ENCODE measurements at regions of chr4 and their contacts with region 1.

Region 1: DNA sequence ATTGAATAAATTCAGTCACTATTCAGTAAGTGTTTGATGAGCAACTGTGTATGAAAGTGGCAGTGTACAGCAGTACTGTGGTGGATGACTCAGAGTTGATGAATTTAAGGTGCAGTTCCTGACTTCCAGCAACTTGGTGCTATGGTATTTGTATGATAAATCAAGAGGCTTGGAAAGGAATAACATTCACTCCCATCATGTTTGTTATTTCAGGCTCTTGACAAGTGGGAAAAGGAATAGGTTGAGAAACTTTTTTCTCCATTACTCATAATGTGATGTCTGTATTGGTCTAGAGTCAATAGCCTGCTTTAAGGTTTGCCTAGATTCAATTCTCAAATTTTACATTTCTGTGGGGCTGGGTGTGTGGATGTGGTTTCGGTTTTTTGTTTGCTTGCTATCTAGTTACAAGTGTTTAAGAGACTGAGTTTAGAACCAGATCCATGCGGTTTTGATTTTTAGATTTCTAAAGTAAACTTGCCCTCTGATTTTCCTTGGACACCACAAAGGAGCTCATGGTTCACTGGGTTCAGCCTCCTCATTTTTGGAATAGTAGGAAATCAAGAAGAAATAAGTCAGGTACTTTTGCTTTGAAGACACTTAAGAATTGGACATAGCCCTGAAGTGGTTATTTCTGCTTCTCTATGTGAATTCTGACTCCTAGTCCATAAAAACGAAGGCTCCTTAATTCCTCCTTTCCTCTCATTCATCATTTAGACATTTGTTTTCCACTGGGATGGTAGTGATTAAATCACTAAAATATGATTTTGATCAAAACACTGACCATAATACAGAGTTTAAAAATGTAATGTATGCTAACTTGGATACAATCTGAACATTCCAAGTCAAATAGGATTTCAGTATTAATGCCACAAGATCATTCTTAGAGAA is 34.9 kb upstream of the CYP2U1 start:
- DNase-seq: peak; percentile 42
- ATAC-seq: peak; percentile 92
- H3K4me3 Mint-ChIP-seq: no peak overlapping the region
- H3K27ac Mint-ChIP-seq: no peak overlapping the region
- H3K4me1 Mint-ChIP-seq: peaks cover 17% of the 10 kb centered on the region
- H3K27me3 Mint-ChIP-seq: peaks cover 13% of the 10 kb centered on the region

Region 2: DNA sequence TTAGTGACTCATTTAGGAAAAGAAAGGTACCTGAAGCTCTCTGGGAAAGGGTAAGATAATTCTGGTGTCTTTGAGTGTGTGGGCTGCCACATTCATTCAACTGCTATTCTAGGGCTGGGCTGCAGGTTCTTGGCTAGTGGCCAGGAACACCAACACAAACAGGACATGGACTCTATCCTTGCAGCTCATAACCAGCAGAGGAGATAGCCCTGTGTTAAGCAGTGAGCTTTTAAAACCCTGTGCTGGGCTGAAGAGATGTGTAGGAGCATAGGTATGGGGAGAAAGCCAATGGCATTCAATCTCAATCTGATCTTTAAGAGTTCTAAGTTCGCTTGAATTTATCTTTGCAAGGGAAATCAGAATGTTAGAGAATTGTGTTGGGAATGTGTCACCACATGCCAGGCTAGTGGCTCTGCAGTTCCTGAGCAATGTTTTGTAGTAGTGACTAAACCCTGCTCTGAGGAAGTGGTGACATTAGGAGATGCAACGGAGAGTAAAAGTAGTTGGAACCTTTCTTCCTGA is 32.5 kb before region 1 on chr4:
- CTCF ChIA-PET with region 1: interaction called, 4 read pairs
- POLR2A ChIA-PET with region 1: interaction called, 3 read pairs
- intact Hi-C with region 1: loop called (anchors 1 to 2 kb)
- DNase-seq: peak; percentile 69
- ATAC-seq: peak; percentile 73
- H3K4me3 Mint-ChIP-seq: no peak overlapping the region
- H3K27ac Mint-ChIP-seq: no peak overlapping the region
- H3K4me1 Mint-ChIP-seq: peaks cover 22% of the 10 kb centered on the region
- H3K27me3 Mint-ChIP-seq: peaks cover 4% of the 10 kb centered on the region

Measured in activated CD4-positive, alpha-beta T cell treated with anti-CD3 and anti-CD28 coated beads for 36 hours (primary cell).